ENCODE measurements at regions of chr14 and their contacts with region 1.

Region 1: DNA sequence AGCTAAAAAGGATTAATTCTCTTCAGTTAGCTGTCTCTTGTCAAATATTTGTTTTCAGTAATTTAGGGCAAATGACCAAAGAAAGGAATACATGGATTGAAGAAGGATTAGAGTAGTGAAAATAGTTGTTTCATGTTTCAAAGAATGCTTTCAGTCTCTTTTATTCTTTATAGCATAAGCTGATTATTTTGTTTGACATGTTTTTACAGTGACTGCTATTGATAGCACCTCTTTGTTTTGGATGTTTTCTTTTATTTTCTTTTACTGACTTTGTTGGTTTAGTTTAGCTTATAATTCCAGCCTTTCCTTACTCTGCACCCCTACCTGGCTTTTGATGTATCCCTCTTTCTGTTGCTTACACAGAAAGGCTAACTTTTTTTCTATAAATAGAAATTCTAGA is 29.3 kb upstream of the SGPP1 start:
- DNase-seq: no peak
- H3K4me3 ChIP-seq: no peak overlapping the region
- H3K27ac ChIP-seq: no peak overlapping the region
- H3K4me1 ChIP-seq: no peaks in the 10 kb centered on the region
- H3K27me3 ChIP-seq: no peaks in the 10 kb centered on the region
- CTCF ChIP-seq: no peak

Region 2: DNA sequence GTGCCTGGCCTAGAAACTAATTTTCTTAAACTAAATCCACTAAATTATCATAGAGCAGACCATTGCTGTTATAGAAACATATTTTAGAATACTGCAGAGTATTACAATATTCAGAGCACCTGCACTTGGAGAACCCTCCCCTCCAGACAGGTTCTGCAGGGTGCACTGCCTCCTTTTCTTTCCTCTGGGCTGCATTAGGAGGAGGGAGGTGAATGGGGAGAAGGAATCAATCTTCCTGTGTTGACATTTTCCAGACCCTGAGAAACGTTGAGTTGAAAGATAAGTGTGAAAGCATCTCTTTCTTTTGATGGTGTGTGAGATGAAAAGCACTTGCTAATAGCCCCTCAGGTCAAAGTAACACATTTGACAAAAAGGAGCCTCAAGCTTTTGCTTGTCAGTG is 102.9 kb after region 1 on chr14:
- CTCF ChIA-PET with region 1: no interaction called
- POLR2A ChIA-PET with region 1: interaction called, 12 read pairs
- intact Hi-C with region 1: no loop called
- DNase-seq: no peak
- H3K4me3 ChIP-seq: no peak overlapping the region
- H3K27ac ChIP-seq: no peak overlapping the region
- H3K4me1 ChIP-seq: no peaks in the 10 kb centered on the region
- H3K27me3 ChIP-seq: no peaks in the 10 kb centered on the region
- CTCF ChIP-seq: no peak